Right cardiac atrium (tissue), 5 donors: ENCODE measurements at regions of chr12 and their contacts with region 1.

Region 1: DNA sequence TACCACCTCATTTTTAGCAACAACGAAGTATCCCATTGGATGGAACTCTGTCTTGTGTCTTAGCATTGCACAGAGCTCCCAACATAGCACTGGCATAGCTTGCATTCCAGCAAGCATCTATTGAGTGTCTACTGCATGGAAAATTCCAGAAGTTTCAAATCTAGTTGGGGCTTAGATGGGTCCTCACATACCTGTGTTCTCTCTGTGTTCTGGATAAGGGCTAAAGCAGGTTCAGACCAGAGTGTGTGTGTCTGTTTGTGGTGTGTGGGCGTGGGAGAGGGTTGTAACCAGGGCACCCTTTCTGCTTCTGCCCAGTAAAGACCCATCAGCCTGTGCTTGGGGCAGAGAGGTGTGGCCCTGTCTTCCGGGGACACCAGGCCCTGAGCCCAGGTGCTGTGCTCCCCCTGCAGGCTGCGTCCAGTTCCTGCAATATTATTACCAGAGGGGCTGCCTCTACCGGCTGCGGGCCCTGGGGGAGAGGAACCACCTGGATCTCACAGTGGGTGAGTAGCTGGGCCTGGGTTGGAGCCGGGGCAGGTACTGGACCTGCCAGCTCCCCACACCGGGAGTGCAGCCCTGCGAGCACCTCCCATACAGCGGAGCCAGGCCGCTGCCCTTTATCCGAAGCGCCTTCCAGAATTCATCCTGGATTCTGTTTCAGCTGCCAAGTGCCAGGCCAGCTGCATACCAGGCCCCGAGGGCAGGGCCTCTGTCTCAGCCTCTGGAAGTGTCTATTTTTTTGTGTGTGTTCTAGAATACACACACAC is 20.3 kb downstream of the RHOF start:
- DNase-seq: peak; percentile 65 to 86 (median 86)
- ATAC-seq: peak; percentile 56 to 60
- H3K4me3 ChIP-seq: no peak overlapping the region
- H3K27ac ChIP-seq: no peak overlapping the region
- H3K4me1 ChIP-seq: peaks cover 6% of the 10 kb centered on the region
- H3K27me3 ChIP-seq: no peaks in the 10 kb centered on the region

Region 2: DNA sequence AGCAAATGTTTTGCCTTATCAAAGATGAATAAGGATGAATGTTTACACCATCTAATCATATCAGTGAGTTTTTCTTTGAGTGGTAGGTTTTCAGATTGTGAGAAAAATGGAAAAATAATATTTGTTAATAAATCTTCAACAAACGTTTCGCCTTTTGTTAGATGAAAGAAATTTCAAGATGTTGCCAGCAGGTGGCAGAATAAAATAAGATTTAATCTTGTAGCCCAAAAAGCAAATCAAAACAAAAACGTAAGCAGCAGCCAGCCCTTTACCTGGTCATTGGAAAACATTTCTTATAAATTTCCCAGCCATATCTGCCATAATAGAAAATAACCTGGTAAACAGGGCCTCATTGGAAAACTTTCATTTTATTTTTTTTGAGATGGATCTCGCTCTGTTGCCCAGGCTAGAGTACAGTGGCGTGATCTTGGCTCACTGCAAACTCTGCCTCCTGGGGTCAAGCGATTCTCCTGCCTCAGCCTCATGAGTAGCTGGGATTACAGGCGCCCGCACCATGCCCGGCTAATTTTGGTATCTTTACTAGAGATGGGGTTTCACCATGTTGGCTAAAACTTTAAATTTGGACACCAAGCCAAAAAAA is 76.0 kb before region 1 on chr12:
- intact Hi-C with region 1: loop called in 3 of 4 experiments (anchors 5 kb)
- DNase-seq: peak in 1 of 3 donors; percentile 10
- ATAC-seq: no peak
- H3K4me3 ChIP-seq: no peak overlapping the region
- H3K27ac ChIP-seq: no peak overlapping the region
- H3K4me1 ChIP-seq: no peaks in the 10 kb centered on the region
- H3K27me3 ChIP-seq: no peaks in the 10 kb centered on the region

Region 3: DNA sequence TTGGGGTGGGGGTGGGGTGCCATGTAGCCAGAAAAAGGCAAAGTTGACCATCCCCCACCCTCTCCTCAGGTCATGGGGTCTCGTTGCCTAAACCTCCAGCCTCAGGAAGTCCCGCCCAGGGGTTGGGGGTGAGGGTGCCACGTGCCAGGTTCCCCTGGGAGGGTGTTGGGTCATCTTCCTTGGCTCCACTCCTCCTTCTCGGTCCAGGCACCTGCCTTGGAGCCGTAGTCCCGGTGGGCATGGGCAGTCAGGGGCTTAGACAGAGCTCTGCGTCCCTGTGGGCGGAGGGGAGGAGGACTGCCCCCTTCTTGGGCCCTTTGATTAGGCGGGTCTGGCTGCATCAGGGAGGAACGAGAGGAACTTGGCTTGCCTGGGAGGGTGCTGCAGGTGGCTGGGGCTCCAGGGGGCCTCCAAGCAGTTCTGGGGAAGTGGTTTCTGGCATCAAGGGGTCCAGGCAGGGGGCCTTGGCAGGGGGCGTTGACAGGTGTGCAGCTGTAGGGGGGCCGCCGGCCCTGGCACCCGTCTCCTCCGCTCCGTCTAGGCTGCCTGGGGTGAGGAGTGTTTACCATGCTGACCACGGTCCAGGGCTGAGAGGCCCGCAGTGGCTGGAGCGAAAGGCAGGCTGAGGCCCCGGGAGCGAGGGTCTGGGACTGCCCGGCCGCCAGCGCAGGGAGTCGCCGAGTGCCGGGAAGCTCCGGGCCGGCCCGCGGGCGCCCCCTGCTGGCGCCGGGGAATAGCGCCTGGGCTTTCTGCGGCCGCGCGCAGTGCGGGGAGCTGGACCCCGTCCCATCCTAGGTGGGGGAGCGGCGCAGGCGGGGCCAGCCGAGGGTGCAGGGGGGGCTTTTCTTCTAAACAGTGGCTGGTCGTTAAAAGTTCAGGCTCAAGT is 38.5 kb after region 1 on chr12:
- intact Hi-C with region 1: loop called in 1 of 4 experiments (anchors 5 kb)
- DNase-seq: peak; percentile 80 to 92 (median 89)
- ATAC-seq: peak; percentile 87 to 90
- H3K4me3 ChIP-seq: peak overlapping the region; percentile 57
- H3K27ac ChIP-seq: peak overlapping the region; percentile 40
- H3K4me1 ChIP-seq: peaks cover 11% of the 10 kb centered on the region
- H3K27me3 ChIP-seq: no peaks in the 10 kb centered on the region

Region 4: GRCh38 chr12:121933522-121934308 is 160.5 kb after region 1 on chr12:
- intact Hi-C with region 1: no loop called
- DNase-seq: no peak
- ATAC-seq: no peak
- H3K4me3 ChIP-seq: no peak overlapping the region
- H3K27ac ChIP-seq: no peak overlapping the region
- H3K4me1 ChIP-seq: no peaks in the 10 kb centered on the region
- H3K27me3 ChIP-seq: no peaks in the 10 kb centered on the region